ENCODE measurements at regions of chr9 and their contacts with region 1.

Region 1: DNA sequence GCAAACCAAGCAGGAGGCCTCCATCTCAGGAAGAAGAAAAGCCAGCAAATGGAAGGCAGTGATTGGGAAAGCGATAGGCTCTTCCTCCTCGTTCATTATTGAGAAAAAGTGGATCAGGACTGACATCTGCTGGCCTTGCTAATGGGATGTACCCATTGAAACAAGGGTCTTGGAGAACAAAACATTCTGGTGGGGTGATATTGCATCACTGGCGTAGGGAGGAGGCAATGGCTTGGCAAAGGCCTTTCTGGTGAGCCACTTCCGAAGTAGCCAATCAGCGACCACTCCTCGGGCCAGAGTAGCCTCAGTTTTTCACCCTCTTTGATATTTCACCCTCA is 86.7 kb upstream of the NFIB start:
- DNase-seq: peak; percentile 19 to 55
- ATAC-seq: peak; percentile 74 to 85
- H3K4me3 ChIP-seq: peak overlapping the region in 2 of 4 donors; percentile 10 to 39
- H3K27ac ChIP-seq: peak overlapping the region; percentile 2 to 62 (median 10)
- H3K4me1 ChIP-seq: peaks cover 5 to 33% of the 10 kb centered on the region in 2 donors
- H3K27me3 ChIP-seq: no peaks in the 10 kb centered on the region
- CTCF ChIP-seq: peak; percentile 40 to 68 (median 56)
- POLR2A ChIP-seq: no peak

Region 2: GRCh38 chr9:13351778-13352386 is 1048.7 kb before region 1 on chr9:
- in situ Hi-C with region 1: no loop called
- intact Hi-C with region 1: loop called (anchors 5 kb)
- DNase-seq: no peak
- ATAC-seq: peak in 1 of 2 donors; percentile 41
- H3K4me3 ChIP-seq: no peak overlapping the region
- H3K27ac ChIP-seq: no peak overlapping the region
- H3K4me1 ChIP-seq: no peaks in the 10 kb centered on the region
- H3K27me3 ChIP-seq: no peaks in the 10 kb centered on the region
- CTCF ChIP-seq: peak; percentile 28 to 68 (median 52)
- POLR2A ChIP-seq: no peak